ENCODE measurements at regions of chr14 and their contacts with region 1.

Region 1: GRCh38 chr14:49461529-49462401 is 124.4 kb downstream of the RPS29 start:
- DNase-seq: peak; percentile 85
- H3K4me3 Mint-ChIP-seq: no peak overlapping the region
- H3K27ac Mint-ChIP-seq: no peak overlapping the region
- H3K4me1 Mint-ChIP-seq: no peaks in the 10 kb centered on the region
- H3K27me3 Mint-ChIP-seq: peaks cover 35% of the 10 kb centered on the region
- CTCF ChIP-seq: peak; percentile 67

Region 2: GRCh38 chr14:49425921-49426320 is 35.8 kb before region 1 on chr14:
- CTCF ChIA-PET with region 1: interaction called, 11 read pairs
- POLR2A ChIA-PET with region 1: no interaction called
- intact Hi-C with region 1: no loop called
- DNase-seq: no peak
- H3K4me3 Mint-ChIP-seq: no peak overlapping the region
- H3K27ac Mint-ChIP-seq: no peak overlapping the region
- H3K4me1 Mint-ChIP-seq: peaks cover 16% of the 10 kb centered on the region
- H3K27me3 Mint-ChIP-seq: no peaks in the 10 kb centered on the region
- CTCF ChIP-seq: no peak

Region 3: GRCh38 chr14:49447540-49448107 is 14.1 kb before region 1 on chr14:
- CTCF ChIA-PET with region 1: interaction called, 32 read pairs
- POLR2A ChIA-PET with region 1: interaction called, 3 read pairs
- intact Hi-C with region 1: no loop called
- DNase-seq: no peak
- H3K4me3 Mint-ChIP-seq: no peak overlapping the region
- H3K27ac Mint-ChIP-seq: no peak overlapping the region
- H3K4me1 Mint-ChIP-seq: no peaks in the 10 kb centered on the region
- H3K27me3 Mint-ChIP-seq: peaks cover 34% of the 10 kb centered on the region
- CTCF ChIP-seq: no peak

Region 4: GRCh38 chr14:49497725-49498348 is 36.1 kb after region 1 on chr14:
- CTCF ChIA-PET with region 1: interaction called, 97 read pairs
- POLR2A ChIA-PET with region 1: interaction called, 3 read pairs
- intact Hi-C with region 1: loop called (anchors 1 kb)
- DNase-seq: peak; percentile 68
- H3K4me3 Mint-ChIP-seq: no peak overlapping the region
- H3K27ac Mint-ChIP-seq: no peak overlapping the region
- H3K4me1 Mint-ChIP-seq: no peaks in the 10 kb centered on the region
- H3K27me3 Mint-ChIP-seq: no peaks in the 10 kb centered on the region
- CTCF ChIP-seq: peak; percentile 78

Region 5: GRCh38 chr14:49550286-49551184 is 88.8 kb after region 1 on chr14:
- CTCF ChIA-PET with region 1: interaction called, 28 read pairs
- POLR2A ChIA-PET with region 1: no interaction called
- intact Hi-C with region 1: loop called (anchors 1 kb)
- DNase-seq: no peak
- H3K4me3 Mint-ChIP-seq: no peak overlapping the region
- H3K27ac Mint-ChIP-seq: no peak overlapping the region
- H3K4me1 Mint-ChIP-seq: no peaks in the 10 kb centered on the region
- H3K27me3 Mint-ChIP-seq: no peaks in the 10 kb centered on the region
- CTCF ChIP-seq: peak; percentile 35

Region 6: DNA sequence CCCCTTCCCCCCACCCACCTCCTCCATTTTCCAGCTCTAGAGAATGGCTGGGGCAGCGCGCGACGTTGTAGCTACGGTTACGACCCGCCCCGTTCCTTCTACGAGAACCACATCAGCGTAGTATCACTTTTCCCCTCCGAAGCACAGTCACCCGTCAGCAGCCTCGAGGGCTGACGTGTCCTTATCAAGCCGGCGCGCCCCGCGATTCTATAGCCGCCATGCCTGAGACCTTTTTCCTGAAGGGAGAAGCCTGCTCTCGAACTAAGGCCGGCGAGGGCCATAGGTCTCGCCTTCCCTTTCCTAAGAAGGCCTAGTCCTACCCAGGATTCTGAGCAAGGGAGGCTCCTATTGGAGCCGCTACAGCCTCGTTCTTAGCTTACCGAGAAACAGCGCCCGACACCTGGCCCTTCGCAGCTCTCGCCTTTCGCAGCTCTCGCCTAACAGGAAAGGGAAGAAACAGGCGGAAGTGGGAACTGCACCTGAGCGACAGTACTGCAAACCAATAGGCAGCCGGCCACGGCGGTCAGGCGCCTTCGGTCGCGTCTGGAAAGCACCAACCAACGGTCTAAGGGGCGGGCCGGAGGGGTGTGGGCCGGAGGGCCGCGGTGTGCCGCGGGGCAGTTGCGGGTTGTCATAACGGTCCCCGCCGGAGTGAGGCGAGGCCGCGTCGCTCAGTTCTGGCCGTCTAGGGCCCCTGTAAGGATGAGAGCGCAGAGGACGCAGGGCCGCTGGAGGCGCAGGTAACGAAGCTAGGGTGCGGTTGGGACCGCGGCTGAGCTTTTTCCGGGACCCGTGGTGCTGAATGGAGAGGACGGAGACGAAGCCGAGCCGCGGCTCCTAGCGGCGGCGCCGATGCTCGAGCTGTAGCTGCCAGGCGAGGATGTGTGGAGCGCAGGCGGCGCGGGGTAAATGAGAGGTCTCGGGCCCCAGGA is 158.7 kb after region 1 on chr14 and contains the starts of genes MGAT2 and RPL36AL:
- CTCF ChIA-PET with region 1: no interaction called
- POLR2A ChIA-PET with region 1: interaction called, 3 read pairs
- intact Hi-C with region 1: loop called (anchors 5 kb)
- DNase-seq: peak; percentile 98
- H3K4me3 Mint-ChIP-seq: peak within 1 kb of the TSS; percentile 99
- H3K27ac Mint-ChIP-seq: peak within 1 kb of the TSS; percentile 99
- H3K4me1 Mint-ChIP-seq: peaks cover 28% of the 10 kb centered on the region
- H3K27me3 Mint-ChIP-seq: no peaks in the 10 kb centered on the region
- CTCF ChIP-seq: peak; percentile 14
- total RNA-seq, gene MGAT2: 43.8 and 44.3 TPM in 2 replicates
- total RNA-seq, gene RPL36AL: 257 and 299 TPM in 2 replicates